Activated T-helper 1 cell treated with anti-CD3 and anti-CD28 coated beads, Interleukin-12 subunit alpha, Interleukin-12 subunit beta, Interleukin-2, Interleukin-4 antibody, amounts not matched to agents 30 ng/mL and 10 ng/mL and 1 ng/mL, durations not matched to agents 14 hours and 24 hours and 36 hours (primary cell): ENCODE measurements at regions of chr7 and their contacts with region 1.

Region 1: GRCh38 chr7:35707422-35707821 is 12.5 kb upstream of the HERPUD2 start:
- DNase-seq: no peak
- H3K4me3 Mint-ChIP-seq: no peak overlapping the region
- H3K27ac Mint-ChIP-seq: no peak overlapping the region
- H3K4me1 Mint-ChIP-seq: peaks cover 20% of the 10 kb centered on the region
- H3K27me3 Mint-ChIP-seq: peaks cover 16% of the 10 kb centered on the region

Region 2: GRCh38 chr7:35681231-35682029 is 26.0 kb before region 1 on chr7:
- intact Hi-C with region 1: loop called (anchors 1 kb)
- DNase-seq: no peak
- H3K4me3 Mint-ChIP-seq: peak overlapping the region; percentile 10
- H3K27ac Mint-ChIP-seq: peak overlapping the region; percentile 31
- H3K4me1 Mint-ChIP-seq: peaks cover 57% of the 10 kb centered on the region
- H3K27me3 Mint-ChIP-seq: no peaks in the 10 kb centered on the region

Region 3: DNA sequence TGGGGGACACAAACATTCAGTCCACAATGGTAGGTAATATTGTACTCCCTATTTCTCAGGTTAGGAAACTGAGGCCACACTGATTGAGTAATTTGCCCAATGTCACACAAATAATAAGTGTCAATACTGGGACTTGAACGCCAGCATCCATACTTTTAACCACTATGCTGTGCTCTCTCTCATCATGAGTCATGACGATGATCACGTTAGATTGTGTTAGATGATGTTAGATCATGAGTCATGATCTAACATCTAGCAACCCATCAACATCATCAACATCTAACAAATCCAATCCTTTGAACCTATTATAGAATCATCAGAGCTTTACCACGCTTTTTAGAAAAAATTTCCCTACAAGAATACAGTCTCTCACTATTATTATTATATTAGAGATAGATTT is 15.6 kb after region 1 on chr7:
- intact Hi-C with region 1: loop called (anchors 1 kb)
- DNase-seq: no peak
- H3K4me3 Mint-ChIP-seq: peak overlapping the region; percentile 24
- H3K27ac Mint-ChIP-seq: peak overlapping the region; percentile 56
- H3K4me1 Mint-ChIP-seq: peaks cover 49% of the 10 kb centered on the region
- H3K27me3 Mint-ChIP-seq: peaks cover 6% of the 10 kb centered on the region

Region 4: DNA sequence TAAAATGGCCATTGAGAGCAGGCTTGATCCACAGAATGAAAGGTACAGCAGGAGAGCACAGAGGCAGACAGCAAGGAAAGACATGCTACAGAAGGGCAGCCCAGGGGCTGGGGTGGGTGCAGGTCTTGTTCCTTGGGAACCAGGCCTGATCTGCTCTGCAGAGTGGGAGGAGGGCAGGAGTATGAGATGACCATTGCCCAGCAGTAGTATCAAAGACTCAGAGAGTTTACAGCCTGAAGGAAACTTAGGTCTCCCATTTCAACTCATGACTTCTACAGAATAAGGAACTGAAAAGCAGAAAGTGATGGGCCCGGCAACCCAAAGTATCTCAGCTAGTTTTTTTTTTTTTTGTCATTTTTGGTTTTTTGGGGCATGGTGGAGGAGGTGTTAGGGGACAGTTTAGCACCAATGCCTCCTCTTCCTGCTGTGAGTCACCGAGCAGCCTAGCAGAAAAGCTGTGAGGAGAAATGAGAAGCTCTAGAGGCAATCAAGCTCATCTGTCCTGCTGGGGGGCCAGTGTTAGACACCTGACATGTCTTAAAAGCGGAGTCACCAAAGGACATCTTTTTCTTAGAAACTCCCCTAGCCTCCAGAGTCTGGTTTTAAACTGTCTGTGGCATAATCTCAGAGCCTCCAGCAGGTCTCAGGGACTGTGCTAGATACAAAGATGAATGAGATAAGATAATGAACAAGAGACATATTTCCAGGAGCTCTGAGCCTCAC is 21.8 kb after region 1 on chr7:
- intact Hi-C with region 1: loop called (anchors 1 kb)
- DNase-seq: peak; percentile 19
- H3K4me3 Mint-ChIP-seq: peak overlapping the region; percentile 26
- H3K27ac Mint-ChIP-seq: peak overlapping the region; percentile 55
- H3K4me1 Mint-ChIP-seq: peaks cover 69% of the 10 kb centered on the region
- H3K27me3 Mint-ChIP-seq: peaks cover 6% of the 10 kb centered on the region

Region 5: DNA sequence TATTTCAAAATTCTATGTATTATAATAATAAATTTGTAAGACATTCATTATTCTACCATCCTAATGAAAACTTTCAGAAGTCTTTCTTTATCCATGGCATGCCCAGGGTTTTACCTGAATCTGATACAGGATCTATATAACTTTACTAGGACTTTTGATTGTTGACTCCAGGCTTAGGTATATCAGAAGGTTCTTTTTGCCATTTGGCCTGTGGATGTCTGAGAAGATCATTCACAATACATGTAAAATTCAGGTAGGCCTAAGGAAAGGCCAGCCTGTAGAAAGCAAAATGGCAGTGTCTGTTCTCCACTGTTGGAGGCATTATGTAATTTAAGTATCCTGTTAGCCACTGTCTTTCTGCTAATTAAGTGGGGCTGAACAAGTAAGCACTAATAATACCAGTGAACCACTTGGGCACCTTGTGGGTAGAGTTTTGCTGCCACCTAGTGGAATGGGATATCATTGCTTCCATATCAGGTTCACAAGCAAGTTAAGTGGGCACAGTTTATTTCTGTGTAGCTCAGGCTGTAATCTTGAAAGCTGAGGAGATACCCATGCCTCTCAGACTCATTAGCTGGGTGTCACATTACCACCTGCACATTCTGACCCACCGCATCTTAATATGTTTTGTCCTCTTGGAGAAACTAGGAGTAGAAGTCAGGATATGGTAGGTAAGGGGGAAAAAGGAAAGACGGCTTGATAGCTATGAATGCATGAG is 198.9 kb after region 1 on chr7:
- intact Hi-C with region 1: loop called (anchors 1 kb)
- DNase-seq: peak; percentile 43
- H3K4me3 Mint-ChIP-seq: no peak overlapping the region
- H3K27ac Mint-ChIP-seq: no peak overlapping the region
- H3K4me1 Mint-ChIP-seq: peaks cover 6% of the 10 kb centered on the region
- H3K27me3 Mint-ChIP-seq: no peaks in the 10 kb centered on the region